Adrenal gland (tissue), 19 donors: ENCODE measurements at regions of chr3 and their contacts with region 1.

Region 1: DNA sequence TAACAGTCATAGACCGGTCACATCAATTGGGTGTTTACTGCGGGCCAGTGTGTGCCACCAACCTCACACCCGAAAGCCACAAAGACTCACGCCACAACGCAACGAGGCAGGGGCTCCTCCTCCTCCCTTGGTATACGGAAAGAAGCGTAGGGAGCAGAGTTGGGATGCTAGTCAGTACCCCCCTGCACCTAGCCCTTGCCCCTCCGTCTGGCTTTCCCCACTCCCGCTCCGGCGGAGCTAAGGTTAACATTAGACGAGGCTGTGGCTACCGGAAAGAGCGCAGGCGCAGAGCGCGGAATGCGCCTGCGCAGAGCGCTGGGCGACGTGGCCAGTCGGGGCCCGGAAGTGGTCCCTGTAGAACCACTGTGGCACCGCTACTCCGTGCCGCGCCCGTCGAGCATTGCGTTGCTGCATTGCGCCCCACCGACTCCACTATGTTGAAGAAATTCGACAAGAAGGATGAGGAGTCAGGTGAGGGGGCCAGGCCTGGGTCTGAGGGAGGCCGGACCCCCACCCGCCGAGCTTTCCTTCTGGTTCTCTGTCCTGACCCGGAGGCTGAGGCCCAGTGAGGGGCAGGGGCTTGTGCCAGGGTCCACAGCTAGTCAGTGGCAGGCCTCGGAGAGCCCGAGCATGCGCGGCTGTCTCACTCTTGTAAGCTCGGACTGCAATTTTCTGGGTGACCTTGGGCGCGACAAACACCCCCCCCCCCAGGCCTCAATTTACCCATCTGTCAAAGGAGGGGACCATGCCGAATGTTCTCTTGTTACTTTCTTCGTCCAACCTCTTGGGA is at the start of gene COPG1:
- DNase-seq: peak; percentile 79 to 94 (median 86)
- H3K4me3 ChIP-seq: peak within 1 kb of the TSS; percentile 68 to 99 (median 84)
- H3K27ac ChIP-seq: peak within 1 kb of the TSS; percentile 60 to 89 (median 81)
- H3K4me1 ChIP-seq: peaks cover 14 to 34% of the 10 kb centered on the region in 2 donors
- H3K27me3 ChIP-seq: no peaks in the 10 kb centered on the region
- CTCF ChIP-seq: peak in 1 of 6 experiments; percentile 17
- POLR2A ChIP-seq: peak; percentile 84 to 88
- total RNA-seq, gene COPG1: 105 to 318 (median 166) TPM

Region 2: DNA sequence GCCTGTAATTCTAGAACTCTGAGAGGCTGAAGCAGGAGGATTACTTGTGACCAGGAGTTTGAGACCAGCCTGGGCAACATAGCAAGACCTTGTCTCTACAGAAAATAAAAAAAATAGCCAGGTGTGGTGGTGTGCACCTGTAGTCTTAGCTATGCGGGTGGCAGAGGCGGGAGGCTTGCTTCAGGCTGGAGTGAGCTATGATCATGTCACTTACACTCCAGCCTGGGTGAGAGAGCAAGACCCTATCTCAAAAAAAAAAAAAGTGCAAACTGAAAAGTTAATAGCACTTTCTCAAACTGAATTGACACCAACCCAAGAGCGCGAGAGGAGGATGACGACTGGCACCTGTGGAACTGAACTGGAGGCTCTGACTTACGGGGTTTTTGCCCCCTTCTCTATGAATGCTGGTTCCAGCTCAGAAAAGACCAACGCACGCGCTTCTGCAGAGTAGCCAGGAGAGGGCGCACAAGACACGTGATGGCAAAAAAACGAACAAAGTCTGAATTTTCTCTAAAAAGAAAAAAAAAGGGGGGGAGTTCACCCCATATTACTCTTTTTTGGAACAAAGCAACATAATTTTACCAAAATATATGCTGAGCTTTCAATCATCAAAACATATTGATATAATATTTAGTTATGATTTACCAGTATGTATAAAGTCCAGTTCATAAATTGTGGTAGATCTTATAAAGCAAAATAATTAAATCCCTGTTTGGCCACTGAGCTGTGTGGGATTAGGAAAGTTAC is 279.3 kb before region 1 on chr3:
- intact Hi-C with region 1: loop called in 1 of 2 experiments (anchors 10 kb)
- DNase-seq: peak in 6 of 7 donors; percentile 31 to 59 (median 43)
- H3K4me3 ChIP-seq: no peak overlapping the region
- H3K27ac ChIP-seq: no peak overlapping the region
- H3K4me1 ChIP-seq: peaks cover 0 to 3% of the 10 kb centered on the region in 2 donors
- H3K27me3 ChIP-seq: no peaks in the 10 kb centered on the region
- CTCF ChIP-seq: peak; percentile 79 to 89 (median 83)
- POLR2A ChIP-seq: no peak

Region 3: DNA sequence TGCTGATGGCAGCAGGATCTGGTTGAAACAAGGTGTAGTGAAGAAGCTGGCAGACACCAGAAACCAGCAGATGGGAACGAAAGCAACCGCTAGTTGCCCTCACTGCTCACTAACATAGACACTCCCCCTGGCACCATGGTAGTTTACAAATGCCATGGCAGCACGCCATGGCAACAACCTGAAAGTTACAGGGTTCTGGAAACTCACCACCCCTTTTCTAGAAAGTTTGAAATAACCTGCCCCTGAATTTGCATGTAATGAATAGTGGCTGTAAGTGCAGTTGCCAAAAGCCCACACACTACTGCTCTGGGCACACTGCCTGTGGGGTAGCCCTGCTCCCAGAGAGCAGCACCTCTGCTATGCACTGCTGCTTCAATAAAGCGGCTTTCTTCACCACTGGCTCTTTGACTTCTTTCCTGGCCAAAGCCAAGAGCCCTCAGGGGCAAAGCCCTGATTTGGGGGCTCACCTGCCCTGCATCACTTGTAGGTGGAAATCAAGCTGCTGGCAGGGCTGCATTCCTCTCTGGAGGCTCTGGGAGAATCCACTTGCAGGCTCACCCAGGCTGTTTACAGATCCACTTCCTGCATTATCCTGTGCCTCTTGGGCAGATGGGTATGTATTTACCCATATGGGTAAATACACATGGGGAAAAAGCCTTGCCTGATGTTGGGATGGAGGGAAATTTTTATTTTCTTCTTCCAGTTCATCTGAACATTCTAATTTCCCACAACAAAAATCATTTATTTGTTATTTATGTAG is 190.8 kb before region 1 on chr3:
- intact Hi-C with region 1: loop called (anchors 10 kb)
- DNase-seq: peak in 3 of 7 donors; percentile 37 to 43 (median 39)
- H3K4me3 ChIP-seq: no peak overlapping the region
- H3K27ac ChIP-seq: no peak overlapping the region
- H3K4me1 ChIP-seq: no peaks in the 10 kb centered on the region
- H3K27me3 ChIP-seq: no peaks in the 10 kb centered on the region
- CTCF ChIP-seq: no peak
- POLR2A ChIP-seq: no peak

Region 4: DNA sequence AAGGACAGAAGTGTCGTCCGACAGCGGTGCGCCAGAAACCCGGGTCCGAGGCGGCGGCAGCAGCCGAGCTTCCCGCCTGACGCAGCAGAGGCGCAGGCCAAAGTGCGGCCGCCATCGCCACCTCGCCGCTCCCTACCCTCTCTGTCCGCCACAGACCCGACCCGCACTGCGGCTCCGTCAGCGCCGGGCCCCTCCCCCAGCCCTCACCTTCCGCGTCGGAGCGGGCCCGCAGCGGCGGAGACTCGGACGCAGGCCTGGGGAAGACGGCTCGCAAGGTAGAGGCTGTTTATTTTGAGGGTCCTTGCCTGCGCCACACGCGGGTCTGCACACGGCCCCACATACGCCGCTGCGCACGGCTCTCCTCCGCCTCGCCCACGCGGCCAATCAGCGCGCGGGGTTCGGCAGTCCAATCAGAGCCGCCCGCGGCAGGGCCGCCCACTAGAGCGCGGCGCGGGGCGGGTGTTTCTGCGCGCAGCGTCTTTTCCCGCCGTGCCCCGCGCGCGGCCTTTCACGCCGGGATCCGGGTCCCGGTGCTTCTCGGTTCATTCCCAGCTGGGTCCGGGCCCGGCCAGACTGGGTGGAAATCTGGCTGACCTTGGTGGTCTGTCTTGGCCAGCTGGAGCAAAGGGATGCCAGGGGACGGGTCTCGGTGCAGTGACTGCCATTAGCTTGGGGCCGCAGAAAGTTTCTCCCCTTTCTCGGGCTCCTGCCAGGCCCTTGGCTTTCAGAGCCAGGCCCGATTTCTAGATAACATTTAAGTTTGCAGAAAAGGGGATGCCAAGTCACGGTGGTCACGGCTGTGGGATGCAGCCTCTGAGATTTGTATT is 65.7 kb before region 1 on chr3 and contains the start of gene CNBP:
- intact Hi-C with region 1: loop called in 1 of 2 experiments (anchors 5 kb)
- DNase-seq: peak; percentile 92 to 96 (median 94)
- H3K4me3 ChIP-seq: peak within 1 kb of the TSS; percentile 82 to 100 (median 92)
- H3K27ac ChIP-seq: peak within 1 kb of the TSS; percentile 96 to 99 (median 99)
- H3K4me1 ChIP-seq: peaks cover 35 to 58% of the 10 kb centered on the region in 2 donors
- H3K27me3 ChIP-seq: no peaks in the 10 kb centered on the region
- CTCF ChIP-seq: no peak
- POLR2A ChIP-seq: peak; percentile 94 to 99
- total RNA-seq, gene CNBP: 296 to 804 (median 483) TPM